ENCODE measurements at regions of chr17 and their contacts with region 1.

Region 1: GRCh38 chr17:40522250-40522952 is 21.0 kb upstream of the TNS4 start:
- DNase-seq: no peak
- H3K4me3 ChIP-seq: no peak overlapping the region
- H3K27me3 ChIP-seq: no peaks in the 10 kb centered on the region
- CTCF ChIP-seq: no peak

Region 2: DNA sequence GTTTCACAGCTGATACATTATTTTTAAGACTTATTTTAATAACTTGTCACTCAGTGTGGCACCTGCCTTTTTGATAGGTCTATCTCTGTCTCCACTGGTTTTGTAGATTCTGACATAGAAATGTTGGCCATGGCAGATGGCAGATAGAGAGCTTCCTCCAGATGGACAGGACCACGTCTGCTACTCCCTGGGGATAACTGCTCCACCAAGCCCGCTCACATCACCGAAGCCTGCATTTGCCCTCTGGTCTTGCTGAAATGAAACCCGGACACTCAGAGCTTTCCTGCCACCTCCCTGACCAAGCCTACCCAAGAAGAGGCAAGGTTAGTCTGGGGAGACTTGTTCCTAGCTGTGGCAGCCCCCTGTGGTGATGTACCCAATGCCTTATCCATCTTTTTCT is 1228.5 kb after region 1 on chr17:
- CTCF ChIA-PET with region 1: no interaction called
- POLR2A ChIA-PET with region 1: interaction called, 10 read pairs
- DNase-seq: no peak
- H3K4me3 ChIP-seq: no peak overlapping the region
- H3K27me3 ChIP-seq: no peaks in the 10 kb centered on the region
- CTCF ChIP-seq: no peak